CD14-positive monocyte (primary cell): ENCODE measurements at regions of chr5 and their contacts with region 1.

Region 1: GRCh38 chr5:172150514-172151425 is 37.3 kb downstream of the STK10 start:
- DNase-seq: peak; percentile 96 to 98 (median 98)
- H3K4me3 ChIP-seq: peak overlapping the region in 1 of 3 experiments; percentile 51
- H3K4me3 Mint-ChIP-seq: peak overlapping the region; percentile 74 to 84
- H3K27ac ChIP-seq: peak overlapping the region; percentile 85 to 86
- H3K27ac Mint-ChIP-seq: peak overlapping the region; percentile 97 to 99 (median 99)
- H3K4me1 ChIP-seq: peaks cover 64 to 70% of the 10 kb centered on the region in 2 donors
- H3K4me1 Mint-ChIP-seq: peaks cover 69% of the 10 kb centered on the region
- H3K27me3 ChIP-seq: no peaks in the 10 kb centered on the region
- H3K27me3 Mint-ChIP-seq: peaks cover 0 to 2% (median 2%) of the 10 kb centered on the region in 3 donors
- CTCF ChIP-seq: no peak

Region 2: GRCh38 chr5:172188033-172188892 is 37.5 kb after region 1 on chr5 and contains the start of gene STK10:
- intact Hi-C with region 1: loop called (anchors 2 to 5 kb)
- DNase-seq: peak; percentile 82 to 91 (median 90)
- H3K4me3 ChIP-seq: peak within 1 kb of the TSS; percentile 84 to 97 (median 85)
- H3K4me3 Mint-ChIP-seq: peak within 1 kb of the TSS; percentile 99 to 100
- H3K27ac ChIP-seq: peak within 1 kb of the TSS; percentile 97
- H3K27ac Mint-ChIP-seq: peak within 1 kb of the TSS; percentile 95 to 100 (median 99)
- H3K4me1 ChIP-seq: peaks cover 34 to 38% of the 10 kb centered on the region in 2 donors
- H3K4me1 Mint-ChIP-seq: peaks cover 29% of the 10 kb centered on the region
- H3K27me3 ChIP-seq: no peaks in the 10 kb centered on the region
- H3K27me3 Mint-ChIP-seq: peaks cover 0 to 5% (median 1%) of the 10 kb centered on the region in 3 donors
- CTCF ChIP-seq: peak; percentile 92
- polyA plus RNA-seq, gene STK10: 21.5 to 180 (median 47.4) TPM

Region 3: DNA sequence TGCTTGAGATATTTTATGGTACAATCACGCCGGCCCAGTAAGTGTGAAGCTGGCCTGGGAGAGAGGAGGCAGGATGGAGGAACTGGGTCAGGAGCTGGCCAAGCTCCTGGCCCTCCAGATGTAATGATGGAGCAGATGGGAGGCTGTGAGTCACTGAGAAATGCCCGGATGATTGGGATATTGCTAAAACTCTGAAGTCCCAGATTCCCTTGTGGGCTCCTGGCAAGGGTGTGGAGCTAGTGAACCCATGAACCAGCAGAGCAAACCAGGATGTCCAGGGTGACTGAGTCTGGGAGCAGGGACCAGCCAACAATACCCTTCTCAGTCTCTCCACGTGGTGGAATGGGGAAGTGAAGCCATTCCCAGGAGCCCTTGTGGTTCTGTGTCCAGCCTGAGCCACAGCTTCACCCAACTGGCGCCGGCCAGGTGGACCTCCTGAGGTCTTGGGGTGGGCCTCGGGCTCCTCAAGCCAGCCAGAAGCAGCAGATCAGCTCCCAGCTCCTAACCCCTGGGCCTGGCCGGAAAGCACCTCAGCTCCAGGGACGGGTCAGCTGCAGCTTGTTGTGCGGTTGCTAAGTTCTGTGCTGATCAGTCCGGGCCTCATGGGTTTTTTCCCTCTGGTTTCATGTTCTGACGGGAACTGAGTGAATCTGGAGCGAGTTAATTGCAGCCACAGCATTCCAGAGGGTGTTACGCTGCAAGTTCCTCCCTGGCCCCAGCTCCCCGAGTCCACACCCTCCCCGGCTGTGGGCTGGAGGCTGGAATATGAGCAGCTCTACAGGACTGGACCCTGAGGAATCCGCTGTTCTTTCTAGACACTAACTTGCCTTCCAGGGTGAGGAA is 582.6 kb after region 1 on chr5:
- intact Hi-C with region 1: no loop called
- DNase-seq: peak in 2 of 3 donors; percentile 12 to 60
- H3K4me3 ChIP-seq: no peak overlapping the region
- H3K4me3 Mint-ChIP-seq: no peak overlapping the region
- H3K27ac ChIP-seq: no peak overlapping the region
- H3K27ac Mint-ChIP-seq: peak overlapping the region in 3 of 7 donors; percentile 28 to 47 (median 37)
- H3K4me1 ChIP-seq: peaks cover 0 to 6% of the 10 kb centered on the region in 2 donors
- H3K4me1 Mint-ChIP-seq: peaks cover 11% of the 10 kb centered on the region
- H3K27me3 ChIP-seq: no peaks in the 10 kb centered on the region
- H3K27me3 Mint-ChIP-seq: peaks cover 2 to 9% (median 7%) of the 10 kb centered on the region in 3 donors
- CTCF ChIP-seq: no peak